Aorta (tissue), 5 donors: ENCODE measurements at regions of chr13 and their contacts with region 1.

Region 1: GRCh38 chr13:46334035-46334822 is 52.8 kb downstream of the RUBCNL start:
- DNase-seq: no peak
- ATAC-seq: no peak
- H3K4me3 ChIP-seq: no peak overlapping the region
- H3K27ac ChIP-seq: no peak overlapping the region
- H3K4me1 ChIP-seq: no peaks in the 10 kb centered on the region
- H3K27me3 ChIP-seq: no peaks in the 10 kb centered on the region

Region 2: DNA sequence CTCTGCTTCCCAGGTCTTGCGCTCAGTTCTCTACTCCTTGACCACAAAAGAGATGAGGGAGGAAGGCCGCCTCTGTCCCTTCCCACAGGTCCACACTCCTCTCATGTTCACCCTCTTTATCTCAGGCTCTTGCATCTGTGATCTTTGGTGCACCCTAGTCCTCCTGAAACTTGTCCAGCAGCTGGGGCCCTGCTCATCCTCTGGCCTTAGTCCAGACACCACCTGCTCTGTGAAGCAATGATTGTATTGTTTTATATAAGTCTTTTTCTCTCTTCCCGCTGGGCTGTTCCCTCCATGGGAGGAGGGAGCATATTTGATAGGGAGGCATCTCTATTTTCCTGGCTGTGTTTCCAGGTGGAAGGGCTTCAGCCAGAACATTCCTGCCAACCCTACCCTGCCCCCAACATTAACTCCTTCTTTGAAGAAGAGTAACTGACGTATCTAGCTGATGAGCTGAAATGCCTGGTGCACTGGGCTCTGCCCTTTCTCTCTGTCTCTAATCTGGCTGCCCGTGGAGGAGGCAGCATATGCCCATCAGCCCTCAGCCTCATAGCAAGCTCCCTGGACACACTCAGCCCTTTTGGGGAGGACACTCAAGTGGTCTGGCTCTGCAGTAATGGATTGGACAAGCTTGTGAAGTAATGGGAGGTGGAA is 444.5 kb before region 1 on chr13:
- intact Hi-C with region 1: loop called in 1 of 2 experiments (anchors 5 kb)
- DNase-seq: no peak
- ATAC-seq: no peak
- H3K4me3 ChIP-seq: no peak overlapping the region
- H3K27ac ChIP-seq: no peak overlapping the region
- H3K4me1 ChIP-seq: no peaks in the 10 kb centered on the region
- H3K27me3 ChIP-seq: no peaks in the 10 kb centered on the region

Region 3: GRCh38 chr13:46278474-46278873 is 55.8 kb before region 1 on chr13:
- intact Hi-C with region 1: no loop called
- DNase-seq: no peak
- ATAC-seq: no peak
- H3K4me3 ChIP-seq: no peak overlapping the region
- H3K27ac ChIP-seq: no peak overlapping the region
- H3K4me1 ChIP-seq: no peaks in the 10 kb centered on the region
- H3K27me3 ChIP-seq: no peaks in the 10 kb centered on the region